ENCODE measurements at regions of chr12 and their contacts with region 1.

Region 1: DNA sequence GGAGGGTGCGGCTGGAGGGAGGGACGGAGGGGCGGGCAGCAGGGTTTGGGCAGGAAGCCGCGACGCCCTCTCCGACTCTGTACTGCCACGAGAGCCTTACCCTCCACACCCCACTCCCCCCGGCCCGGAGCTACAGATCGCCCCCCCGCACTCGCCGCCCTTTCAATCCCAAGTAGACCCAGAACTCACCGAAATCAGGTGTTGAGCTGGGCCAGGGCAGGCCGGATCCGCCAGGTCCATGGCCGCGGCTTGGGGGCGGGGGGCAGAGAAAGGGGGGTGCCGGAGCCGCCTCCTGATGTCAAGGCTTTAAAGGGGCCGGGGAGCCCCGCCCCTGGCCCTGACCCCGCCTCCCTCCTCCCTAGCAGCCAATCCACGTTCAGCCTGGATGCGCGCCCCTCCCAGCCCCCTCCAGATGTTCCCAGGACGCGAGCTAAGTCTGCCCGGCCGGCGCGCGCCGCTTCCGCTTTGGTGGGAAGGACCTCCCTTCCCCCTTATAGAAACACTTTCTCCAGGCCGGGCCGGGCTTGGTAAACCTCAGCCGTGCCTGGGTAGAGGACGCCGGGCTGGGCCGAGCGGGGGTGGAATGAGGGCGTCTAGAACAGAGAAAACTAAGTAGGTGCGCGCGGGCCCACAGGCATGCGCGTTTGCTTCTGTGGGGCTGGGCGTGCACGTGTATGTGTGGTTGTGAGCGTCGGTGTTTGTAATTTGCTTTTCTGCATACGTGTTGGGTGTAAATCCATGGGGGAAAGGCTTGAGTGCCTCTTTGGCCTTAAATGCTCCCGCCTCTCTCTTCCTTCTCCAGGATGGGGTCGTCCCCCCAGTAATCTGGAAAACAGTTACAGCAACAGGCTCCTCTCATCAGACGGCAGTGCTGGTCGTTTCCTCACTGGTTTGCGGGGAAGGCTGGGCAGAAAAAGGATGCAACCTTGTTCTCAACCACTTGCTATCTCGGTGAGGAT is at the start of gene NCKAP5L:
- DNase-seq: peak; percentile 97 to 98 (median 97)
- ATAC-seq: peak; percentile 96 to 97 (median 97)
- H3K4me3 ChIP-seq: peak within 1 kb of the TSS; percentile 76 to 88 (median 80)
- H3K27ac ChIP-seq: peak within 1 kb of the TSS in 2 of 3 donors; percentile 73 to 83
- H3K4me1 ChIP-seq: peaks cover 0 to 15% (median 0%) of the 10 kb centered on the region in 4 donors
- H3K27me3 ChIP-seq: no peaks in the 10 kb centered on the region
- CTCF ChIP-seq: no peak
- POLR2A ChIP-seq: peak; percentile 75
- total RNA-seq, gene NCKAP5L: 7.0 to 8.8 (median 7.9) TPM

Region 2: DNA sequence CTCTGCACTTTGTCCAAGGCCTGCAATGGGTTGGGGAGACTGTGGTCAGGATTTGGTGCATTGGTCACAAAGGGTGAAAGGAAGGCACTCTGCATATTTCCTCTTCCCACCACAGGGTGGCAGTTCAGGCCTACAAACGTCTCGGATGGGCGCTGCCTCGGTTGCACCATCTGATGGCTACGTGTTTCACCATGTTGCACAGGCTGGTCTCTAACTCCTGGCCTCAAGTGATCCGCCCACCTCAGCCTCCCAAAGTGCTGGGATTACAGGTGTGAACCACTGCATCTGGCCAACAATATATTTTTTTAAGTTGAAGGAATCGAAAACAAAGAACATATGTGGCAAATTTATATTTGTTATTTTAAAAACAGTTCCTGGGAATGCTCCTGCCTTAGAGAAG is 52.0 kb before region 1 on chr12:
- intact Hi-C with region 1: loop called in 1 of 2 experiments (anchors 10 kb)
- DNase-seq: peak; percentile 57 to 66 (median 63)
- ATAC-seq: peak; percentile 88 to 95 (median 90)
- H3K4me3 ChIP-seq: no peak overlapping the region
- H3K27ac ChIP-seq: no peak overlapping the region
- H3K4me1 ChIP-seq: no peaks in the 10 kb centered on the region
- H3K27me3 ChIP-seq: no peaks in the 10 kb centered on the region
- CTCF ChIP-seq: peak; percentile 72 to 88 (median 78)
- POLR2A ChIP-seq: no peak